B cell (primary cell): ENCODE measurements at regions of chr1 and their contacts with region 1.

Region 1: GRCh38 chr1:30420519-30421050 is 302.8 kb downstream of the MATN1 start:
- DNase-seq: no peak
- ATAC-seq: no peak
- H3K4me3 ChIP-seq: no peak overlapping the region
- H3K4me3 Mint-ChIP-seq: no peak overlapping the region
- H3K27ac ChIP-seq: no peak overlapping the region
- H3K27ac Mint-ChIP-seq: no peak overlapping the region
- H3K4me1 ChIP-seq: no peaks in the 10 kb centered on the region
- H3K4me1 Mint-ChIP-seq: no peaks in the 10 kb centered on the region
- H3K27me3 ChIP-seq: peaks cover 0 to 8% (median under 1%) of the 10 kb centered on the region in 4 experiments
- H3K27me3 Mint-ChIP-seq: peaks cover 38% of the 10 kb centered on the region
- CTCF ChIP-seq: no peak

Region 2: GRCh38 chr1:29532751-29533150 is 887.8 kb before region 1 on chr1:
- CTCF ChIA-PET with region 1: no interaction called
- POLR2A ChIA-PET with region 1: no interaction called
- intact Hi-C with region 1: no loop called
- DNase-seq: no peak
- ATAC-seq: no peak
- H3K4me3 ChIP-seq: no peak overlapping the region
- H3K4me3 Mint-ChIP-seq: no peak overlapping the region
- H3K27ac ChIP-seq: no peak overlapping the region
- H3K27ac Mint-ChIP-seq: no peak overlapping the region
- H3K4me1 ChIP-seq: no peaks in the 10 kb centered on the region
- H3K4me1 Mint-ChIP-seq: no peaks in the 10 kb centered on the region
- H3K27me3 ChIP-seq: peaks cover 0 to 3% (median 0%) of the 10 kb centered on the region in 4 experiments
- H3K27me3 Mint-ChIP-seq: peaks cover 4% of the 10 kb centered on the region
- CTCF ChIP-seq: no peak

Region 3: DNA sequence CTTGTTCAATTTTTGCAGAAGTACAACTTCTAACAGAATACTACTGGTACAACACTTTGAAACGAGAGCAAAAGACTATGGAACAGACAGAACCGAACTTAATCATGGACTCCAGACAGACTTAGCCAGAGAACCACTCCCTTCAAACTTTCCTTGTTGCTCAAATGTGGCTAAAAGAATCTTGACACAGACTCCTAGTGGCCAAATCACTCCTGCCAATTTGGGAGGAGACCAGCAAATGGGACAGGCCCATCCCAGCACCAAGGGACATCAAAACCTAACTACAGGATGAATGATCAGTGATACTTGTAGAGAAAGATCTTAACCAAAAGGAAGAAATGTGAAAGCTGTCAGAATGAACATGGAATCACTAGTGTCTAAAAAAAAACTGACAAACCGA is 148.8 kb after region 1 on chr1:
- CTCF ChIA-PET with region 1: no interaction called
- POLR2A ChIA-PET with region 1: no interaction called
- intact Hi-C with region 1: loop called (anchors 10 kb)
- DNase-seq: no peak
- ATAC-seq: no peak
- H3K4me3 ChIP-seq: no peak overlapping the region
- H3K4me3 Mint-ChIP-seq: no peak overlapping the region
- H3K27ac ChIP-seq: no peak overlapping the region
- H3K27ac Mint-ChIP-seq: no peak overlapping the region
- H3K4me1 ChIP-seq: no peaks in the 10 kb centered on the region
- H3K4me1 Mint-ChIP-seq: no peaks in the 10 kb centered on the region
- H3K27me3 ChIP-seq: peaks cover 0 to 2% (median 1%) of the 10 kb centered on the region in 4 experiments
- H3K27me3 Mint-ChIP-seq: peaks cover 33% of the 10 kb centered on the region
- CTCF ChIP-seq: no peak